ENCODE measurements at regions of chr6 and their contacts with region 1.

Region 1: GRCh38 chr6:1327629-1328028 is 15.7 kb downstream of the FOXQ1 start:
- DNase-seq: no peak
- ATAC-seq: no peak
- H3K4me3 ChIP-seq: no peak overlapping the region
- H3K27ac ChIP-seq: no peak overlapping the region
- H3K4me1 ChIP-seq: no peaks in the 10 kb centered on the region
- H3K27me3 ChIP-seq: peaks cover 0 to 43% (median 0%) of the 10 kb centered on the region in 9 donors
- CTCF ChIP-seq: no peak
- POLR2A ChIP-seq: no peak

Region 2: DNA sequence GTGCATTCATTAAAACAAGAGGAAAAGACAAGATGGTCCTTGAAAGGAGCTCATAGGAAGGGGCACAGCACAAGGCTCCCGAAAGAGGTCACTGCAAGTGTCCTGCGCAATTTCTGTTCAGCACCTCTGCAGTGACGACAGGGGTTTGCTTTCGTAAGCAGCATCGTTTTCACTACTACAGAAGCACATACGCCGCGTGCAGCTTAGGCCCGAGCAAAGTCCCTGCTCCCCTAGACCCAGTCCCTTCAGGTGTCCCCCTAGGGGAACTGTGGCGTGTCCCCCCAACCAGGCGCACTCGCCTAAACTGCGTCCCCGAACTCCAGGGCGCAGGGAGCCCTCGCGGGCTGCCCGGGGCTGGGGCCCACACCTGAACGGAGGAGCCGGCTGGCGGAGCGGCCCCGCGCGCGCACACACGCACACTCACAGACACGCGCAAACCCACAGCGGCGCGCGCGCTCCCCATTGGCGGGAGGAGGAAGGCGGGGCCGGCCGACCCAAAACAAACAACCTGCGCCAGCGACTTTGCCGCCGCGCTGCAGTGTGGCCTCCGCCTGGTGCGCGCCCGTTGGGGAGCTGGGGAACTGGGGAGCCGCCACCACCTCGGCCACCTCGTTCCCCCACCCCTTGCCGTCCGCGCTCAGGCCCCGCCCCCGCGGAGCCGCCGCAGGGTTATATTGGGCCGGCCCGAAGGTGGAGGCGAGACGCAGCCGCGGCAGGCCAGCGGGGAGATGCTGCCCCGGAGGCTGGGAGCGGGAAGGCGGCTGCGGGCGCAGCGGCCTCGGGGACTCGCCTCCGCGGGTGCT is 16.0 kb before region 1 on chr6 and contains the start of gene FOXQ1:
- intact Hi-C with region 1: loop called in 1 of 10 experiments (anchors 1 kb)
- DNase-seq: peak in 1 of 5 donors; percentile 13
- ATAC-seq: peak in 3 of 4 donors; percentile 25 to 55 (median 34)
- H3K4me3 ChIP-seq: peak within 1 kb of the TSS; percentile 27 to 53 (median 39)
- H3K27ac ChIP-seq: no peak within 1 kb of the TSS
- H3K4me1 ChIP-seq: peaks cover 0 to 36% (median 20%) of the 10 kb centered on the region in 12 donors
- H3K27me3 ChIP-seq: peaks cover 46 to 87% (median 72%) of the 10 kb centered on the region in 9 donors
- CTCF ChIP-seq: no peak
- POLR2A ChIP-seq: no peak
- total RNA-seq, gene FOXQ1: not detected

Measured in heart left ventricle (tissue), 16 donors.